ENCODE measurements at regions of chr2 and their contacts with region 1.

Region 1: GRCh38 chr2:113282747-113283533 is 4.2 kb upstream of the PAX8 start:
- DNase-seq: no peak
- H3K4me3 ChIP-seq: no peak overlapping the region
- H3K27me3 ChIP-seq: 0 out of 2 replicates have a peak, but pooled peaks cover 1% of the 10 kb centered on the region
- CTCF ChIP-seq: no peak

Region 2: DNA sequence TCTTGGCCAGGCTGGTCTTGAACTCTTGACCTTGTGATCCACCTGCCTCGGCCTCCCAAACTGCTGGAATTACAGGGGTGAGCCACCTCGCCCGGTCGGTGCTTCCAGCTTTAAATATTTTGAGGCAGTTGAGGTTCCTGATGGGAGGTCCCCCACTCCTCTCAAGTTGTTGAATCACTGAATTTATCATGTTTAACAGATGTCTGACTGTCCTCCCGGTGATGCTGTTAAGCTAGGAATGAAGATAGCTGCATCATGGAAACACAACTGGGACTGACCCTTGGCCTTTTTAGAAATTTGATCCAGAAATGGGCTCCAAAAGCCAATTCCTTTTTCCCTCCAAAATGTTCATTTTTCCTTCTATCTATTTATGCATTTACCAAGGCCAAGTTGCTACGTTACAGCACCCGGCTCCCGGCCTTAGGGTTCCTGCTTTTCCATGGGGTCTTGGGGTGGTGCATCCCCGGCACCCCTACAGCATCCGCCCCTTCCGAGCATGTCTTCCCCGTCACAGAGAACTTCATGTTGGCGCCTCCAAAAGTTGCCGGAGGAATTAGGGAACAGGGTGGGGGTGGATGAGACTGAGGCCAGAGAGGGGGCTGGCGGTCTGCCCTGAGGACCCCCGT is 48.1 kb before region 1 on chr2:
- CTCF ChIA-PET with region 1: no interaction called
- POLR2A ChIA-PET with region 1: interaction called, 11 read pairs
- DNase-seq: no peak
- H3K4me3 ChIP-seq: peak overlapping the region; percentile 72
- H3K27me3 ChIP-seq: no peaks in the 10 kb centered on the region
- CTCF ChIP-seq: no peak

Measured in BJ (cell line).